CD14-positive monocyte (primary cell): ENCODE measurements at regions of chr11 and their contacts with region 1.

Region 1: DNA sequence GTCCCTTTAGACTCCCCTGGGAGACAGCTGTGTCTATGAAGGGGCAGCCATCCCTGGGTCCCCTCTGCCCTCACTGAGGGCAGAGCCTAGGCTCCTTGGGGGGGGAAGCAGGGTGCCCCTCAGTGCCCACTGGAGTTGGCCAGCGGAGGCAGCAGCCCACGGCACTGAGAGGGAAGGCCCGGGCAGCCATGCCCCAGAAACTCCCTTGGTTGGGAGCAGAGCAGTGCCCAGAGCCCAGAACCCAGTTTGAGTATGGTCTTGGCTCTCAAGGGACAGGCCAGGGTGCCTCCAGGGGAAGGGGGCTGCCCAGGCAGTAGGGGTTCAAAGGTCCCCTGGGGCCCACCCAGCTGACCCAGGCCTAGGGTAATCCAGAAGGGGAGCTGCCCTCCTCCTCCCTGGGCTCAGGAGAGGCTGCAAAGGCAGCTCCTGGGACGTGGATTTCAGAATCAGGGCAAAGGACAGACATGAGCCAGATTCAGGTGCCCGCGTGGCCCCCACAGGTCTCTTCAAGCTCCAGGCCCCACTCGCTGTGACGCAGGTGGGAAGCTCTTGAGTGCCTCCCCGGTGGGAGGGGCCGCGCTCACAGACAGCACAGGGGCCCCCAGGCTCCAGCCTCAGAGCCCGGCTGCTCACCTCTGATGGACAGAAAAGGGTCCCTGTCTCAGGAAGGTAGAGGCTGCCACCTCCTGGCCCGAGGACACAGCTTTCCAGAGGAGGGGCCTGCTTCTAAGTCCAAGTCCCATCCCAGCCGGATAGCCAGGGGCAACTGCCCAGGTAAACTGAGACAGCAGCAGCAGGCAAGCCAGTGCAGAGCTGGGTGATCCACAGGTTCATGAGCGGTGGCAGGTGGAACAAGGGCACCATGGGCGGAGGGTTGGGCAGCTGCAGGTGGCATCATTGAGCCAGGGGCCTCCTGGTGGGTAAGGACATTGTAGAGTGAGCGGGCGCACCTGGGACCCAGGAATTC is 2.6 kb downstream of the C11orf21 start:
- DNase-seq: peak in 1 of 3 donors; percentile 8
- H3K4me3 ChIP-seq: peak overlapping the region in 1 of 3 experiments; percentile 52
- H3K4me3 Mint-ChIP-seq: peak overlapping the region in 1 of 2 donors; percentile 76
- H3K27ac ChIP-seq: peak overlapping the region in 1 of 2 donors; percentile 43
- H3K27ac Mint-ChIP-seq: peak overlapping the region in 4 of 7 donors; percentile 6 to 76 (median 30)
- H3K4me1 ChIP-seq: peaks cover 41 to 53% of the 10 kb centered on the region in 2 donors
- H3K4me1 Mint-ChIP-seq: peaks cover 59% of the 10 kb centered on the region
- H3K27me3 ChIP-seq: no peaks in the 10 kb centered on the region
- H3K27me3 Mint-ChIP-seq: peaks cover 0 to 3% (median 0%) of the 10 kb centered on the region in 3 donors
- CTCF ChIP-seq: no peak

Region 2: DNA sequence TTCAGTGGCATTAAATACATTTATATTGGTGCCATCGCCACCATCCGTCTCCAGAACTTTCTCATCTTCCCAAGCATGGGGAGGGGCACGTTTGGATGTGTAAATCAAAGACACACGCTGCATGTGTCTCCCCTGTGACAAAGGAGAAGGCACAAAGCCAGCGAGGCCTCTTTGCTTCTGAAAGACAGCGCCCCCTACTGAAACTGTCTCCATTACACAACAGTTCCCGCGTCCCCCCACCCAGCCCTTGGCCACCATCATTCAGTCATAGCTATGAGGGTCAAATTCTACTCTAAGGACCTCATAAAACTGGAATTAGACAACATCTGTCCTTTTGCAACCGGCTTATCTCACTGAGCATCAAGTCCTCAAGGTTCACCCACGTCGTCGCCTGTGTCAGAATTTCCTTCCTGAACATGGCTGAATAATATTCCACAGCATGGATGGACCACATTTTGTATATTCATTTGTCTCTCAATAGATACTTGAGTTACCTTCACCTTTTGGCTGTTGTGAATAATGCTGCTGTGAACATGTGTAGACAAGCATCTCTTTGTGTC is 224.7 kb before region 1 on chr11:
- intact Hi-C with region 1: no loop called
- DNase-seq: no peak
- H3K4me3 ChIP-seq: no peak overlapping the region
- H3K4me3 Mint-ChIP-seq: no peak overlapping the region
- H3K27ac ChIP-seq: no peak overlapping the region
- H3K27ac Mint-ChIP-seq: no peak overlapping the region
- H3K4me1 ChIP-seq: no peaks in the 10 kb centered on the region
- H3K4me1 Mint-ChIP-seq: no peaks in the 10 kb centered on the region
- H3K27me3 ChIP-seq: peaks cover 0 to 2% of the 10 kb centered on the region in 2 donors
- H3K27me3 Mint-ChIP-seq: peaks cover 6 to 10% (median 9%) of the 10 kb centered on the region in 3 donors
- CTCF ChIP-seq: peak; percentile 44

Region 3: GRCh38 chr11:2196970-2197770 is 101.9 kb before region 1 on chr11:
- intact Hi-C with region 1: loop called (anchors 2 to 5 kb)
- DNase-seq: peak; percentile 60 to 70 (median 67)
- H3K4me3 ChIP-seq: no peak overlapping the region
- H3K4me3 Mint-ChIP-seq: peak overlapping the region in 1 of 2 donors; percentile 62
- H3K27ac ChIP-seq: no peak overlapping the region
- H3K27ac Mint-ChIP-seq: no peak overlapping the region
- H3K4me1 ChIP-seq: peaks cover 3 to 12% of the 10 kb centered on the region in 2 donors
- H3K4me1 Mint-ChIP-seq: peaks cover 3% of the 10 kb centered on the region
- H3K27me3 ChIP-seq: peaks cover 0 to 5% of the 10 kb centered on the region in 2 donors
- H3K27me3 Mint-ChIP-seq: peaks cover 15 to 25% (median 21%) of the 10 kb centered on the region in 3 donors
- CTCF ChIP-seq: peak; percentile 77

Region 4: DNA sequence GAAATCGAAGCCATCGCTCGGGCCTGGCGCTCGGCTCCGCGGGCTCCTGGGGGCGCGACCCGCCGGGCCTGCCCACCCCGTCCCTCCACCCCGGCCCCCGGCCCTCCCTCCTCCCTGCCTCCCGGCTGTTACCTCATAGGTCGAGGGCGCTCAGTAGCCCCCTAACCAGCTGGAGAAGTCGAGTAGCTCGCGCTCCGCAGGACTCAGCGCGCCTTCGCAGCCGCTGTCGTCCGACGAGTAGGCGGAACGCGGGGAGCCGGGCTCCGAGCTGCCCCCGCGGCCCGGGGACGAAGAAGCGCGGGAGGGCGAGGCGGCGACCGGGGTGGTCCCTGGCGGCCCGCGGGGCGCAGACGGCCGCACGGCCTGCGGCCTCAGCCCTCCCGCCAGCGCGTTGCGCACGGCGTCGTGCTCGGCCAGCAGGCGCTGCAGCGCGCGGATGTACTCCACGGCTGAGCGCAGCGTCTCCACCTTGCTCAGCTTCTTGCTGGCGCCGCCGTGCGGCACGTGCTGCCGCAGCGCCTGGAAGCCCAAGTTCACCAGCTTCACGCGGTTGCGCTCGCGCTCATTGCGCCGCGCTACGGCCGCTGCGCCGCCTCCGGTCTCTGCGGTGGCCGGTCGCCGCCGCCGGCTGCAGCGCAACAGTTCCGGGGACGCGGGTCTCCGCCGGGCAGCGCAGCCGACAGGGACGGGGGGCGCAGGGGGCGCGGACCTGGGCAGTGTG is 29.3 kb before region 1 on chr11:
- intact Hi-C with region 1: loop called in 1 of 2 experiments (anchors 5 kb)
- DNase-seq: peak; percentile 61 to 71 (median 62)
- H3K4me3 ChIP-seq: peak overlapping the region; percentile 35 to 73 (median 38)
- H3K4me3 Mint-ChIP-seq: peak overlapping the region; percentile 73 to 84
- H3K27ac ChIP-seq: peak overlapping the region; percentile 70 to 84
- H3K27ac Mint-ChIP-seq: peak overlapping the region in 6 of 7 donors; percentile 40 to 92 (median 82)
- H3K4me1 ChIP-seq: peaks cover 49 to 68% of the 10 kb centered on the region in 2 donors
- H3K4me1 Mint-ChIP-seq: peaks cover 35% of the 10 kb centered on the region
- H3K27me3 ChIP-seq: peaks cover 0 to 14% of the 10 kb centered on the region in 2 donors
- H3K27me3 Mint-ChIP-seq: peaks cover 13 to 35% (median 13%) of the 10 kb centered on the region in 3 donors
- CTCF ChIP-seq: peak; percentile 16

Region 5: GRCh38 chr11:2400069-2400760 is 101.1 kb after region 1 on chr11 and contains the start of gene TSSC4:
- intact Hi-C with region 1: loop called in 1 of 2 experiments (anchors 1 kb)
- DNase-seq: peak; percentile 100
- H3K4me3 ChIP-seq: peak within 1 kb of the TSS; percentile 88 to 98 (median 93)
- H3K4me3 Mint-ChIP-seq: peak within 1 kb of the TSS; percentile 84 to 91
- H3K27ac ChIP-seq: peak within 1 kb of the TSS; percentile 94 to 95
- H3K27ac Mint-ChIP-seq: peak within 1 kb of the TSS; percentile 89 to 94 (median 92)
- H3K4me1 ChIP-seq: peaks cover 21 to 26% of the 10 kb centered on the region in 2 donors
- H3K4me1 Mint-ChIP-seq: peaks cover 18% of the 10 kb centered on the region
- H3K27me3 ChIP-seq: no peaks in the 10 kb centered on the region
- H3K27me3 Mint-ChIP-seq: peaks cover 0 to 2% (median 0%) of the 10 kb centered on the region in 3 donors
- CTCF ChIP-seq: peak; percentile 95
- polyA plus RNA-seq, gene TSSC4: 28.1 to 74.6 (median 52.0) TPM